ENCODE measurements at regions of chr11 and their contacts with region 1.

Region 1: DNA sequence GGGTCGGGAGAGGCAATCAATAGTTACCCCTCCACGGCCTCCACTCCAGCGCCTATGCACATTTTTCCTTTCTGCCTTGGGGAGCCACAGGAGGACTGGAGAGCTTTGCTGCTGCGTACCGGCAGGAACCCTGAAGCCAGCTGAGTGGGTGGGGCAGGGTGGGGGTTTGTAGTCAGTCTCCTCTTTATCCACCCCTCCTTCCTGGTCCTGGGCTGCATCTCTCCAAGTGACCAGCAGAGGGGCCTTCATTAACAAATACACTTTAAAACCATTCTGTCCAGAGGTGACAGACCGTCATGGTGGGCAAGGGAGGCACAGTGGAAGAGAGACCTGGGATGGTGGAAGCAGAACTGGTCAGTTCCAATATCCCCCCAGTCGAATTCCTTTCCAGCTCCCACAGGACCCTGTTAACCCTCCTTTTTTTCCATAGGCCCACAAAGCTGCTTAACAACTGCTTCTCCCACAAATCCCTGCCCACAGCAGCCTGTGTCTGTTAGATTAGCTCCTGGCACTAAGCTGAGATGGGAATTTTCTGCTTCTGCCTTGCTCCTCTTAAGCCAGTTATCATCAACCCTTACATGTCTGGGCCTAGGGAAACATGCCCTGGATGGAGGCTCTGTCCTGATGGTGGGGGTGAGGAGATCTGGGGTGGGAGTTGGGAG is 3.9 kb upstream of the ABCG4 start:
- DNase-seq: peak; percentile 54
- H3K4me3 ChIP-seq: no peak overlapping the region
- H3K27ac ChIP-seq: no peak overlapping the region
- H3K4me1 ChIP-seq: peaks cover 16% of the 10 kb centered on the region
- H3K27me3 ChIP-seq: peaks cover 38% of the 10 kb centered on the region
- CTCF ChIP-seq: peak; percentile 78

Region 2: GRCh38 chr11:119044708-119045107 is 100.2 kb before region 1 on chr11:
- intact Hi-C with region 1: no loop called
- DNase-seq: no peak
- H3K4me3 ChIP-seq: no peak overlapping the region
- H3K27ac ChIP-seq: no peak overlapping the region
- H3K4me1 ChIP-seq: no peaks in the 10 kb centered on the region
- H3K27me3 ChIP-seq: no peaks in the 10 kb centered on the region
- CTCF ChIP-seq: no peak

Region 3: GRCh38 chr11:119196833-119197483 is 52.0 kb after region 1 on chr11:
- intact Hi-C with region 1: loop called (anchors 10 kb)
- DNase-seq: no peak
- H3K4me3 ChIP-seq: no peak overlapping the region
- H3K27ac ChIP-seq: no peak overlapping the region
- H3K4me1 ChIP-seq: no peaks in the 10 kb centered on the region
- H3K27me3 ChIP-seq: no peaks in the 10 kb centered on the region
- CTCF ChIP-seq: peak; percentile 80

Region 4: GRCh38 chr11:119284344-119285157 is 139.6 kb after region 1 on chr11:
- intact Hi-C with region 1: loop called (anchors 10 kb)
- DNase-seq: no peak
- H3K4me3 ChIP-seq: no peak overlapping the region
- H3K27ac ChIP-seq: no peak overlapping the region
- H3K4me1 ChIP-seq: no peaks in the 10 kb centered on the region
- H3K27me3 ChIP-seq: no peaks in the 10 kb centered on the region
- CTCF ChIP-seq: peak; percentile 65

Region 5: GRCh38 chr11:119295178-119295577 is 150.2 kb after region 1 on chr11:
- intact Hi-C with region 1: no loop called
- DNase-seq: no peak
- H3K4me3 ChIP-seq: no peak overlapping the region
- H3K27ac ChIP-seq: no peak overlapping the region
- H3K4me1 ChIP-seq: peaks cover 33% of the 10 kb centered on the region
- H3K27me3 ChIP-seq: no peaks in the 10 kb centered on the region
- CTCF ChIP-seq: no peak